ENCODE measurements at regions of chr11 and their contacts with region 1.

Region 1: GRCh38 chr11:127843483-127844396 is 743.6 kb downstream of the ETS1 start:
- DNase-seq: peak; percentile 88
- ATAC-seq: peak; percentile 51
- H3K4me3 Mint-ChIP-seq: no peak overlapping the region
- H3K27ac Mint-ChIP-seq: no peak overlapping the region
- H3K4me1 Mint-ChIP-seq: no peaks in the 10 kb centered on the region
- H3K27me3 Mint-ChIP-seq: peaks cover 13% of the 10 kb centered on the region

Region 2: DNA sequence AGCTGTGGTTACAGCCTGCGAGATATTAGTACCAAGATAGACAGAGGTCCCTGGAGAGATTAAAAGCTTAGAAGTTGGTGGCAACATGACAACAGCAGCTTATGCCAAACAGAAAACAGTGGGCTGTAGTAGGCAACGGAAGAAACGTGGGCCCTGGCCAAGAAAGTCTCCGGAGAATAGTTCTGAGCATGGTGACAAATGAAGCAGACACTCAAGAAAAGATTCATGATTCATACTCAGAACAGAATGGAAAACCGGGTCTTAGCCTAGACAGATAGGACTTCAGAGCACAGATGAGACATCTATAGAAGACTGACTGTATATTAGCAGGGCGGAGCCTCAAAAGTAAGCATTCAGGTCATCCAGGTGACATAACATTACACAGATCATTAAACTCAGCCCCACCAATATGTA is 16.2 kb after region 1 on chr11:
- CTCF ChIA-PET with region 1: interaction called, 14 read pairs
- POLR2A ChIA-PET with region 1: no interaction called
- intact Hi-C with region 1: no loop called
- DNase-seq: no peak
- ATAC-seq: no peak
- H3K4me3 Mint-ChIP-seq: no peak overlapping the region
- H3K27ac Mint-ChIP-seq: no peak overlapping the region
- H3K4me1 Mint-ChIP-seq: no peaks in the 10 kb centered on the region
- H3K27me3 Mint-ChIP-seq: peaks cover 7% of the 10 kb centered on the region

Region 3: DNA sequence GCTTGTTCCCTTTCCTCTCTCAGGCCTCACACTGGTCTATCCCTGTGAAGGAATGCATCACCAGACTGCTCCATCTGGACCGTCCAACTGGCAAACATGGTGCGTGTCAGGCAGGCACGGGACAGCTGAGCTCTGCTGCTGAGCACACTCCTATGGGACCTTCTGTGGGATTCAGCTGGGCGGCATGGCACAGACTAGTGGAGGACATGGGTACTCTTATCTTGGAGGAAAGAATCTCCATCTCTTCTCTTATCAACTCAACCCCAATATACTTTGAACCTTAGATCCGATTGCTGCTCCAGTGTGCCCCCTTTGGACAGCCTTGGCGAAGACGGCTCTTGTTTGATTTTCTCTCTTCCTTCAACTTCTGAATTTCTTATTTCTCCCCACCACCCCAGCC is 150.0 kb after region 1 on chr11:
- CTCF ChIA-PET with region 1: no interaction called
- POLR2A ChIA-PET with region 1: no interaction called
- intact Hi-C with region 1: loop called in 1 of 2 experiments (anchors 10 kb)
- DNase-seq: peak; percentile 21
- ATAC-seq: no peak
- H3K4me3 Mint-ChIP-seq: no peak overlapping the region
- H3K27ac Mint-ChIP-seq: no peak overlapping the region
- H3K4me1 Mint-ChIP-seq: no peaks in the 10 kb centered on the region
- H3K27me3 Mint-ChIP-seq: peaks cover 15% of the 10 kb centered on the region

Region 4: GRCh38 chr11:128021349-128022006 is 177.7 kb after region 1 on chr11:
- CTCF ChIA-PET with region 1: interaction called, 8 read pairs
- POLR2A ChIA-PET with region 1: no interaction called
- intact Hi-C with region 1: loop called (anchors 1 to 2 kb)
- DNase-seq: no peak
- ATAC-seq: peak; percentile 48
- H3K4me3 Mint-ChIP-seq: no peak overlapping the region
- H3K27ac Mint-ChIP-seq: no peak overlapping the region
- H3K4me1 Mint-ChIP-seq: peaks cover 7% of the 10 kb centered on the region
- H3K27me3 Mint-ChIP-seq: peaks cover 3% of the 10 kb centered on the region

Region 5: GRCh38 chr11:128164080-128164741 is 320.5 kb after region 1 on chr11:
- CTCF ChIA-PET with region 1: no interaction called
- POLR2A ChIA-PET with region 1: no interaction called
- intact Hi-C with region 1: no loop called
- DNase-seq: no peak
- ATAC-seq: no peak
- H3K4me3 Mint-ChIP-seq: no peak overlapping the region
- H3K27ac Mint-ChIP-seq: no peak overlapping the region
- H3K4me1 Mint-ChIP-seq: peaks cover 6% of the 10 kb centered on the region
- H3K27me3 Mint-ChIP-seq: peaks cover 5% of the 10 kb centered on the region

Region 6: DNA sequence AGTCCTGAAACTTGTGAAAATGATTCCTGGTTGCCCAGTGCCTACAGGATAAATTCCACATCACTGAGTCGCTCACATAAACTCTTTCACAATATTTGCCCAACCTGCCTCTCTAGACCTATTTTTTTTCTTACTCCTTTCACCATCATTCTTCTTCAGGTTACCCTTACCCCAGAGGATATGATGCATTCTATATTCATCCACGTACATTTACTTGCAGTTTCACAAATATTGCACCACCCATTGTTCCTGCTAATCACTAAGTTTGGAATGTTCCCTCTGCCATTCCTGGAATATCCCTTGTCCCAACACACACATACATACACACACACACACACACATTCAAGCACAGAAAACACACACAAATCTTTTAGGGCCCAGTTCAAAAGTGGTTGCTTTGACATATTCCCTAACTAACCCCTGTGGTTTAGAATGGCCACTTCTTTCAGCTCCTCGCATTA is 364.2 kb after region 1 on chr11:
- CTCF ChIA-PET with region 1: no interaction called
- POLR2A ChIA-PET with region 1: no interaction called
- intact Hi-C with region 1: no loop called
- DNase-seq: no peak
- ATAC-seq: peak; percentile 37
- H3K4me3 Mint-ChIP-seq: no peak overlapping the region
- H3K27ac Mint-ChIP-seq: no peak overlapping the region
- H3K4me1 Mint-ChIP-seq: peaks cover 27% of the 10 kb centered on the region
- H3K27me3 Mint-ChIP-seq: no peaks in the 10 kb centered on the region

Region 7: GRCh38 chr11:128367573-128367972 is 523.8 kb after region 1 on chr11:
- CTCF ChIA-PET with region 1: no interaction called
- POLR2A ChIA-PET with region 1: no interaction called
- intact Hi-C with region 1: no loop called
- DNase-seq: peak; percentile 62
- ATAC-seq: peak; percentile 79
- H3K4me3 Mint-ChIP-seq: no peak overlapping the region
- H3K27ac Mint-ChIP-seq: peak overlapping the region; percentile 38
- H3K4me1 Mint-ChIP-seq: peaks cover 20% of the 10 kb centered on the region
- H3K27me3 Mint-ChIP-seq: no peaks in the 10 kb centered on the region

Region 8: DNA sequence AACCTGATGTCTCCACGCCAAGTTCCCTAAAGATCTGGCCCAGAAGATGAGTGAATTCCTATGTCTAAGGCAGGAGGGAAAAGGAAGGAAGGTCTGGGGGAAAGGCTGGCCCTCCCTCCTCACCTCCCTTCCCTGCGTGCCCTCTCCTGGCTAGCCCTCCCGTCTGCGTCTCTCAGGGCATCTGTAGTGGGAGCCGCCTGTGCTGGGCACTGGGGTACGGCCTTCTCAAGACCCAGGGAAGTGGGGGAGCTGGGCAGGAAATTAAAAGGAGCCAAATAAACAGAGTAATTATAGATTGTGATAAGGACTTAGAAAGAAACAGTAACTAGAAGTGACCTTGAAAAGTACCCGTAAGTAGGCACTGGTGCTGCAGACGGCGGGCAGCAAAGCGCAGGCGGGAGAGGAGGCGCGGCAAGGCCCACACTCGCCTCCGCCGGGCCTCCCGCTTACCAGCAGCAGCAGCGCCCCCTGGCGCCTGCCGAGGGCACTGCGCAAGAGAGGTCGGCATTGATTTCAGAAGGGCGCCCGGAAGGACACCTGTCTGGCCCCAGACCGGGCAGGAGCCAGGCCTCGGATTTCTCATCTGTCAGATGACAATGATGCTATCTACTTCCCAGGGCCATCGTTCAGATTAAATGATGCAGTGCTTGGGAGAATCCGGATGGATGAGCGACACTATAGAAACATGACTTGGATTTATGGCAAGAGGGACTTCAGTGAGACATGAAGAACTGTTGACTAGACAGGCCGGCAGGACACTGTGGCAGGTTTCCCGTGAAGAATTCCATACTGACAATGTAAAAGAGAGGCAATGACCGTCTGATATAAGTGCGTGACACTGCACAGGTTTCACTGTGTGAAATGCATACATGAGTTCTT is 1016.1 kb after region 1 on chr11:
- CTCF ChIA-PET with region 1: no interaction called
- POLR2A ChIA-PET with region 1: no interaction called
- intact Hi-C with region 1: loop called in 1 of 2 experiments (anchors 10 kb)
- DNase-seq: peak; percentile 89
- ATAC-seq: peak; percentile 96
- H3K4me3 Mint-ChIP-seq: no peak overlapping the region
- H3K27ac Mint-ChIP-seq: no peak overlapping the region
- H3K4me1 Mint-ChIP-seq: peaks cover 4% of the 10 kb centered on the region
- H3K27me3 Mint-ChIP-seq: no peaks in the 10 kb centered on the region